ENCODE measurements at regions of chr13 and their contacts with region 1.

Region 1: DNA sequence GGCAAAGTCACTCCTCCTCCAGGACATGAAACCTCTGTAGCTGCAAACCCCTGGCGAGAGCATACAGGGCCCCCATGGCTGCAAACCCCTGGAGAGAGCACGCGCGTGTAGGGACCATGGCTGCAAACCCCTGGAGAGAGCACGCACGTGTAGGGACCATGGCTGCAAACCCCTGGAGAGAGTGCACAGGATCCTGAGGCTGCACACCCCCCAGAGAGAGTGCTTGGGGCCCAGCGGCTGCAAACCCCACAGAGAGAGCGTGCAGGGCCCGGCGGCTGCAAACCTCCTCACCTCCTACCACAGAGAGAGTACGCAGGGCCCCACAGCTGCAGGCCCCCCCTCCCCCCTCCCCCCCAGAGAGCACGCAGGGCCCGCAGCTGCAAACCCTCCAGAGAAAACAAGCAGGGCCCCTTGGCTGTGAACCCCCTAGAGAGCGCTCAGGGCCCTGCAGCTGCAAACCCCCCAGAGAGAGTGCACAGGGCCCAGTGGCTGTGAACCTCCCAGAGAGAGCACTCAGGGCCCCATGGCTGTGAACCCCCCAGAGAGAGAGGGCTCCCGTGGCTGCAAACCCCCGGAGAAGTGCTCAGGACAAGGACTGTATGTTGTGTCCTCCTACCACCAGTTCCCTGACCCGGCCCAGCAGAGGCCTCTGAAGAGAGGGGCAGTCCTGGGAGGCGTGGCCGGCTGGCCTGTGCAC is 7.3 kb downstream of the ADPRHL1 start:
- DNase-seq: peak; percentile 40
- ATAC-seq: peak; percentile 82
- H3K4me3 Mint-ChIP-seq: peak overlapping the region; percentile 38
- H3K27ac Mint-ChIP-seq: peak overlapping the region; percentile 59
- H3K4me1 Mint-ChIP-seq: peaks cover 30% of the 10 kb centered on the region
- H3K27me3 Mint-ChIP-seq: no peaks in the 10 kb centered on the region
- CTCF ChIP-seq: no peak

Region 2: GRCh38 chr13:113490496-113491417 is 44.8 kb after region 1 on chr13 and contains the start of gene DCUN1D2:
- CTCF ChIA-PET with region 1: no interaction called
- POLR2A ChIA-PET with region 1: interaction called, 5 read pairs
- intact Hi-C with region 1: loop called (anchors 2 kb)
- DNase-seq: peak; percentile 91
- ATAC-seq: peak; percentile 90
- H3K4me3 Mint-ChIP-seq: peak within 1 kb of the TSS; percentile 90
- H3K27ac Mint-ChIP-seq: peak within 1 kb of the TSS; percentile 77
- H3K4me1 Mint-ChIP-seq: peaks cover 52% of the 10 kb centered on the region
- H3K27me3 Mint-ChIP-seq: no peaks in the 10 kb centered on the region
- CTCF ChIP-seq: no peak
- total RNA-seq, gene DCUN1D2: 19.8 and 26.2 TPM in 2 replicates

Region 3: DNA sequence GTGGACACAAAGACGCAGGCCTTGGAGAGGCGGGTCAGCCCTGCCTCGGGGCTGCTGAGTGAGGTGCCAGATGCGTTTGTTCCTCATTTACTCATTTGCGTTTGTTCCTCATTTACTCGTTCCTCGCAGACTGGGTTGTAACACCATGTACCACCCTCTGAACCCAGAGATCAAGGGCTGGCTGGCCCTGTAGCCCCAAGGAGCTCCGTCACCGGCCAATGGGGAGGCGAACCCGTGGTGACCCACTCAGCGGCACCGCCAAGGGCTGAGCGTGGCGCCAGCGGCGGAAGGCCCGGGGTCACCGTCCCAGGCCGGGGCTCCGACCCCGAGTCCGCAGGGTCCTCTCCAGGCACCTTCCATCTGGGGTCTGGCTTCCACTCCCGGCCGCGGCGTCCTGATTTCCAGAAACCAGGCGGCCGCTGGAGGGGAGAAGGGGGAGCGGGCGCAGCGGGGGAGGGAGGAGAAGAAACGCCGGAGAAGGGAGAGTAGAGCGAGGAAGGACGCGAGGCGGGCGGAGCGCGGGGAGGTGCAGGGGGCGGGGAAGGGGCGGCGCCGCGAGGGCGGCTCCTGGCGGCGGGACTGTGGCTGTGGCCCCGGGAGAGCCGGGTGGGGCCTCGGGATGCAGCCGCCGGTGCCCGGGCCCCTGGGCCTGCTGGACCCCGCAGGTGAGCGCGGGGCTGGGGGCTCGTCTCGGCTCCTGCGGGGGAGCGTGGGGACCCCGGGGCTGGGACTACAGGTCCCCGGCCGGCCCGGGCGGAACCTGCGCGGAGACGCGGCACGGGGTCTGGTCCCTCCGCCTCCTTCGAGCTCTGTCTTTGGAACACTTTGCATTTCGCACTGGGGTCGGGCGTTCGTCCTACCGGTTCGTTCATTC is 312.9 kb after region 1 on chr13 and contains the start of gene TMEM255B:
- CTCF ChIA-PET with region 1: no interaction called
- POLR2A ChIA-PET with region 1: no interaction called
- intact Hi-C with region 1: no loop called
- DNase-seq: peak; percentile 78
- ATAC-seq: peak; percentile 85
- H3K4me3 Mint-ChIP-seq: peak within 1 kb of the TSS; percentile 82
- H3K27ac Mint-ChIP-seq: peak within 1 kb of the TSS; percentile 80
- H3K4me1 Mint-ChIP-seq: peaks cover 19% of the 10 kb centered on the region
- H3K27me3 Mint-ChIP-seq: peaks cover 28% of the 10 kb centered on the region
- CTCF ChIP-seq: no peak
- total RNA-seq, gene TMEM255B: 5.2 and 6.2 TPM in 2 replicates

Region 4: DNA sequence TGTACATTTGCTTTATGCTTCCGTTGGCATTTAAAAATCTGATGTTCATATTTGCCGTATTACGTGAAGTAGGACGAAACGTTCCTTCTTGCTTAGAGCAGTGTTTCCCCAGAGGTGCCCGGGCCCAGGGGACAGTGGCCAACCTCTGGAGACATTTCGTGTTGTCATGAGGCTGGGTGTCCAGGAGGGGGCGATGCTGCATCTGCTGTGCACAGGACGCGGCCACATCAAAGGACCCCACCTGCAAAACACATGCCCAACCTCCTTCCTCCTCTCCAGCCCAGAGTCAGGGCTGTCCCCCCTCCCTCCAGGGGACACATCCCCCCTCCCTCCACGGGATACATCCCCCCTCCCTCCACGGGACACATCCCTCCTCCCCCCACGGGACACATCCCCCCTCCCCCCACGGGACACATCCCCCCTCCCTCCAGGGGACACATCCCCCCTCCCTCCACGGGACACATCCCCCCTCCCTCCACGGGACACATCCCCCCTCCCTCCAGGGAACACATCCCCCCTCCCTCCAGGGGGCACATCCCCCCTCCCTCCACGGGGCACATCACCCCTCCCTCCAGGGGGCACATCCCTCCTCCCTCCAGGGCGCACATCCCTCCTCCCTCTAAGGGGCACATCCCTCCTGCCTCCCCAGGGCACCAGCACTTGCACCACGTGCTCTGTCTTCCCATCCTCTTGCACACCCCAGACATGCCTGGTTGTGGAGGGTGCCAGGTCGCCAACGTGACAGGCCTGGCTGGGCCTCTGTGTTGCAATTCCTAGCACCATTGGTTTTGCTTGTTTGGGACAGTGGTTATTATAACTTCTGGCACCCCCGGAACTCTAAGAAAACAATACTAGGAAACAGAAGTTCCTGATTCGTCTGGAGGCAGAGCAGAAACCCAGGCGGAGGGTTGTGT is 371.3 kb after region 1 on chr13:
- CTCF ChIA-PET with region 1: no interaction called
- POLR2A ChIA-PET with region 1: no interaction called
- intact Hi-C with region 1: no loop called
- DNase-seq: peak; percentile 69
- ATAC-seq: peak; percentile 87
- H3K4me3 Mint-ChIP-seq: peak overlapping the region; percentile 98
- H3K27ac Mint-ChIP-seq: peak overlapping the region; percentile 70
- H3K4me1 Mint-ChIP-seq: peaks cover 24% of the 10 kb centered on the region
- H3K27me3 Mint-ChIP-seq: no peaks in the 10 kb centered on the region
- CTCF ChIP-seq: no peak

Measured in activated B cell treated with CpG ODN at 0.5 μM for 24 hours (primary cell).